ENCODE measurements at regions of chr18 and their contacts with region 1.

Region 1: DNA sequence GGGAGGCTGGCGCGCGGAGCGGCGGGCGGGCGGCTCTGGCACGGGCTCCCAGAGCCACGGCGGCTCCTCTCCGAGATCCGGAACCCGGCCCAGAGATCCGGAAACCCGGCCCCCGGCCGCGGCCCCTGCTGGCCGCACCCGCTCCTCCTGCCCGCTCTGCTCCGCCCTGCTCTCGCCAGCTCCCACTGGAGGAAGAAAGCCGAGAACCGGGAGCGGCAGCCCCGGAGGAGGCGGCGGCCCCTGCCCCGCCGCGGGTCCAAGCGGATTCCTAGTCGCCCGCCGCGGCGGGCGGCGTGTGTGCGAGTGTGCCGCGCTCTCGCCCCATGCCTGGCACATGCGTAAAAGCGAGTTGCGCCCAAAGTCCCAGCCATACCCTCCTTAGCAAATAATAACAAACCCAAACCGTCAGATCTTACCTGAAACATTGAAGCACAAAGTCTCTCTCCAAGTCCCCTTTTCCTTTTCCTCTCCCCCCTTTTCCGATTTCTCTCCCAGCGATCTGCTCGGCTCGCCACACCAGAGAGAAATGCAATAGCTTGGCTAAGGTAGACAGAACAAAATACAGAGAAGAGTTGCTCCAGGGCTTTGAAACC is 108.7 kb upstream of the KCTD1 start:
- DNase-seq: no peak
- H3K4me3 ChIP-seq: peak overlapping the region; percentile 59 to 66
- H3K27ac ChIP-seq: peak overlapping the region; percentile 89
- H3K4me1 ChIP-seq: peaks cover 22% of the 10 kb centered on the region
- H3K27me3 ChIP-seq: no peaks in the 10 kb centered on the region
- CTCF ChIP-seq: no peak
- POLR2A ChIP-seq: peak in 1 of 2 donors; percentile 5

Region 2: GRCh38 chr18:26383454-26384270 is 273.4 kb before region 1 on chr18:
- intact Hi-C with region 1: loop called (anchors 5 kb)
- DNase-seq: no peak
- H3K4me3 ChIP-seq: no peak overlapping the region
- H3K27ac ChIP-seq: no peak overlapping the region
- H3K4me1 ChIP-seq: peaks cover 5% of the 10 kb centered on the region
- H3K27me3 ChIP-seq: no peaks in the 10 kb centered on the region
- CTCF ChIP-seq: peak; percentile 67 to 73 (median 72)
- POLR2A ChIP-seq: no peak

Region 3: GRCh38 chr18:26548429-26549262 is 108.4 kb before region 1 on chr18 and contains the start of gene KCTD1:
- intact Hi-C with region 1: loop called (anchors 5 kb)
- DNase-seq: no peak
- H3K4me3 ChIP-seq: peak within 1 kb of the TSS; percentile 77 to 84
- H3K27ac ChIP-seq: peak within 1 kb of the TSS; percentile 85
- H3K4me1 ChIP-seq: peaks cover 58% of the 10 kb centered on the region
- H3K27me3 ChIP-seq: no peaks in the 10 kb centered on the region
- CTCF ChIP-seq: no peak
- POLR2A ChIP-seq: no peak
- total RNA-seq, gene KCTD1: 46.9 TPM